Activated naive CD4-positive, alpha-beta T cell treated with anti-CD3 and anti-CD28 coated beads for 36 hours (primary cell): ENCODE measurements at regions of chr20 and their contacts with region 1.

Region 1: DNA sequence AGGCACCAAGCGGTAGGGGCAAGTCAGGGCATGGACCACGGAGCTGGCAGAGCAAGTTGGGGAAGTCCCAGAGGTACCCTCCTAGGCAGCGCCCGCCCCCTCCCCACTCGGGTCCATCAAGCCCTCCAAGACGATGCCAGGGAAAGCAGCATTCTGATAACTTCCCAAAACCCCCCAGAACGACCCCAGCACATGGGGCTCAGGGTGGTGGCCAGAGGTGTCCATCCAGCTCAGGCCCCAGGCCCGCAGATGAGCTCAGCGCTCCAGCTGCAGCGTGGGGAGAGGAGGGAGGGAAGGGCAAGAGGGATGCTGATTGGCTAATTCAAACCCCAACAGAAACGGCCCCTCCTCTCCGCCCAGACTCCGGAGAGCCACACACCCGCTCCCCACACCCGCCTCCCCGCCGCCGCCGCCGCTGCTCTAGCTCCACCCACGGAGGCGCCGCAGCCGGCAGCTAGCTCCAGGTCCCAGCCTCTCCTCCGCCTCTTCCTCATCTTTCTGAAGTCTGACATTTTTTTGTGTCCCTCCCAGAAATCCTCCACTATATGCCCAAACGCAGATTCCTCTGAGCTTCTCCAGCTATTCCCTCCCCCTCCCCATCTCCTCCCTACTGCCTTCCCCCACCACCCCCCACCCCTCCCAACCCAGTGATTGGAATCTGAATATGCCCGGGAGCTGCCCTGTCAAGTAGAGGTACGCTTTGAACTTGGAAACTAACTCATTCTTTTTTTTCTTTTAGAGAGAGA is 40.3 kb upstream of the TLDC2 start:
- DNase-seq: peak; percentile 94
- H3K4me3 Mint-ChIP-seq: peak overlapping the region; percentile 88
- H3K27ac Mint-ChIP-seq: peak overlapping the region; percentile 87
- H3K4me1 Mint-ChIP-seq: peaks cover 14% of the 10 kb centered on the region
- H3K27me3 Mint-ChIP-seq: no peaks in the 10 kb centered on the region

Region 2: GRCh38 chr20:36605399-36606157 is 230.0 kb before region 1 on chr20 and contains the start of gene RAB5IF:
- CTCF ChIA-PET with region 1: no interaction called
- intact Hi-C with region 1: no loop called
- DNase-seq: peak; percentile 99
- H3K4me3 Mint-ChIP-seq: peak within 1 kb of the TSS; percentile 97
- H3K27ac Mint-ChIP-seq: peak within 1 kb of the TSS; percentile 95
- H3K4me1 Mint-ChIP-seq: peaks cover 25% of the 10 kb centered on the region
- H3K27me3 Mint-ChIP-seq: no peaks in the 10 kb centered on the region
- total RNA-seq, gene RAB5IF: 79.8 to 85.9 TPM

Region 3: DNA sequence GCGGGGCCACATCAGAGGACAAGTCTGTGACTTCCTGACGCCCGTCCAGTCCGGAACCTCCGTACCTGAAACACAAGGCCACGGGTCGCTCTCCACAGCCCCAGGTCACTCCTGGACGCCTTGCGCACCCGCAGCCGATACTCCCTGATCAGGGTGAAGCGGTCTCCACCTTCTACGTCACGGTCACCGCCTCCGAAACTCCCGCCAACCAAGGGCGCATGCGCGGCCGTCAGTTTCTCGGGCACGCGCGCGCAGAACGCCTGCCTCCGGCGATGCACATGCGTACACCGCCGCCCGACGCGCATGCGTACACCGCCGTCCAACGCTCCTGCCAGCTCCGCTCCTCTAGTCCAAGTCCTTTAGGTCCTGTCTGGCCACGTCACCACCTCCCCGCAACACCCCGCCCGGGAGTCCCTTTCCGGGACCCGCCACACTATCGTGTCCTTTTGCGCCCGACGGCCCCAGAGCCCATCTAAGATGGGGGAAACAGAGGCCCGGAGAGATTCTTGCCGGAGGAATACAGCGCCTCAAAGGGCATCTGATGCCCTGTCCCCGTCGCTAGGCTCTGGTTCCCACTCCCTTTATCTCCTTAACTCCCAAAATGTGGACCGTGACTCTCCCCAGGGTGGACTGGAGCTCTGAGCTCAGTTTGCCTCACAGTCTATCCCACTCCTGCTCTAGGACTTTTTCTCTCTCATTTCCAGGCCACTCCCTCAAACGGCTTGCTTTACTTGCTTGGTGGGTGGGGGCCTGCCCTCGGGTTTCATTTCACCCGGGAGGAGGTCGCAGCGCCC is 61.8 kb before region 1 on chr20 and contains the start of gene DSN1:
- CTCF ChIA-PET with region 1: interaction called, 3 read pairs
- intact Hi-C with region 1: loop called (anchors 5 kb)
- DNase-seq: peak; percentile 98
- H3K4me3 Mint-ChIP-seq: peak within 1 kb of the TSS; percentile 97
- H3K27ac Mint-ChIP-seq: peak within 1 kb of the TSS; percentile 97
- H3K4me1 Mint-ChIP-seq: peaks cover 21% of the 10 kb centered on the region
- H3K27me3 Mint-ChIP-seq: no peaks in the 10 kb centered on the region
- total RNA-seq, gene DSN1: 23.0 to 24.7 TPM

Region 4: GRCh38 chr20:36802326-36803222 is 33.1 kb before region 1 on chr20:
- CTCF ChIA-PET with region 1: no interaction called
- intact Hi-C with region 1: no loop called
- DNase-seq: no peak
- H3K4me3 Mint-ChIP-seq: no peak overlapping the region
- H3K27ac Mint-ChIP-seq: no peak overlapping the region
- H3K4me1 Mint-ChIP-seq: no peaks in the 10 kb centered on the region
- H3K27me3 Mint-ChIP-seq: no peaks in the 10 kb centered on the region

Region 5: DNA sequence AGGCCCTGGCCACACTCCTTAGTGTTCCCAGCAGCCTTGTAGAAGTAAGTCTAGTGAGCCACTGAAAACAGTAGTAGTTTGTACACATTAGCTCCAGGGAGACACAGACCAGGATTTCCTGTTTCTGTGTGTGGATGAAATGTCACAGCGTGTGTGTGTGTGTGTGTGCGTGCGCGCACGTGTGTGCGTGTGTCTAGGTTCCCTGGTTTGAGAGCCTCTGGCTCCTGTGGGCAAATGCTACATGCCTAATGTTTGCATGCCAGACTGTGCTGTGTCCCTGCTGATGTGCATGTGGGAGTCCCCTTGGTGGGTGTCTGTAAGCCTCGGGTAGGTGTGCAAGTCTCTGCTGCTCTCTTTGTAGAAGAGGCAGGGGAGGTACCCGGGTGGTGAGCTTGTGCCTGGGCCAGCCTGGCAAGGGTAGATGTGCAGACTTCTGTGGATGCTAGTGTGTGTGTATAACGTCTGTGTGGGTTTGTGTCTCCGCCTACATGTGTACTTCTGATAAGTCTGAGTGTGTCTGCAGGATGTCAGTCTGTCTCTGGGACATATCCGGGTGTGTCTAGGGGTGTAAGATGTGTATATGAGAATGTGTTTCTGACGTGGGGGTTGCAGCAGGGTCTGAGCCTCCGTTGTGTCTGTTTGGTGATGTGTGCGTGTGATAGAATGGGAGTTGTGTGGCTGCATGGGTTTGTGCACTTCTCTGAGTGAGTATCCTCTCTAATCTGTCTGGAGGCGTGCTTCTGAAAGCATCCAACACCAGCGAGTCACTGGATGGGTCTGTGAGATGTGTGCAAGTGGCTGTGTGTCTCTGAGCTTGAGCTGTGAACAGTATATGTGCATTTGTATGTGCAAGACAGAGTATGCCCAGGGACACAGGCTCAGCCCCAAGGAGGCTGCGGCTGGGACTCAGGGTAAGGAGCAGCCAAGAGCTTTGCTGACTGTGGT is 21.3 kb after region 1 on chr20:
- CTCF ChIA-PET with region 1: interaction called, 5 read pairs
- intact Hi-C with region 1: loop called (anchors 2 kb)
- DNase-seq: peak; percentile 69
- H3K4me3 Mint-ChIP-seq: no peak overlapping the region
- H3K27ac Mint-ChIP-seq: no peak overlapping the region
- H3K4me1 Mint-ChIP-seq: peaks cover 16% of the 10 kb centered on the region
- H3K27me3 Mint-ChIP-seq: peaks cover 7% of the 10 kb centered on the region

Region 6: DNA sequence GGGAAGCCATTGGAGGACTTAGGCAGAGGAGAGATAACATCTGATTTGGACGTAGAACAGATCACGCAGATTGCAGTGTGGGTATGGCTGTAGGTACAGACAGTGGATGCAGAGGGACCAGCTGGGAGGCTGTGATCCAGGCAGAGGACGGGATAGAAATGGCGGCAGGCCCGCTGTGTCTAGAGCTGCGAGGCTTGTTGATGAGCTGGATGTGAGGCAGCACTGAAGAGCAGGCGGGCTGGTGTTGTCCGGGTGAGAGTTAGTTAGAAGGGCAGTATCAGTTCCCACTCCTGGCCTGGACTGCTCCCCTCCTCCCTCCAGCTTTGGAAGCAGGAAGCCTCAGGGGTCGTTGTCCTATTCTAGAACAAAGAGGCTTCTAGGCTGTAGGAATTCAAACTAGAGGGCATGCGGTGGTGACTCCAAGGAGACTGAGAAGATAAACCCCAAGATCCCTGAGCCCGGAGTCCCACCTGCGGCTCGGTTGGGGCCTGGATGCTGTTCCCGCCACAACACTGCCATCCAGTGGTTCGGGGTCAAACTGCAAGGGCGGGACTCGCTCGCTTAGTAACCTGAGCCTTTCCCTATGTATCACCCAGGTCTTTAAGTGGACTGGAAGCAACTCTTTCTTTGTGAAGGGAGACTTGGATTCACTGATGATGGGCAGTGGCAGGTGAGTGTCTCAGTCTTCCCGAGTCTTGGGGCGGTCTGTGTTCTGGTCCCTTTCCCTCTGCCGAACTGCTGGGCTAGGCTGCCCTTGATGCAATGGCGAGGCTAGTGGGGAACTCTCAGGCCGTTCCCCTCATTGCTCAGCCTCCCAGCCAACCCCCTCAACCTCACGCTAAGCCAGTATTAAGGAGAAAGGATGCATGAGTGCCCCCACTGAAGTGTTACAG is 51.5 kb after region 1 on chr20:
- CTCF ChIA-PET with region 1: interaction called, 10 read pairs
- intact Hi-C with region 1: loop called (anchors 1 kb)
- DNase-seq: peak; percentile 92
- H3K4me3 Mint-ChIP-seq: no peak overlapping the region
- H3K27ac Mint-ChIP-seq: peak overlapping the region; percentile 54
- H3K4me1 Mint-ChIP-seq: peaks cover 10% of the 10 kb centered on the region
- H3K27me3 Mint-ChIP-seq: no peaks in the 10 kb centered on the region